PC-9 (cell line): ENCODE measurements at regions of chr10 and their contacts with region 1.

Region 1: DNA sequence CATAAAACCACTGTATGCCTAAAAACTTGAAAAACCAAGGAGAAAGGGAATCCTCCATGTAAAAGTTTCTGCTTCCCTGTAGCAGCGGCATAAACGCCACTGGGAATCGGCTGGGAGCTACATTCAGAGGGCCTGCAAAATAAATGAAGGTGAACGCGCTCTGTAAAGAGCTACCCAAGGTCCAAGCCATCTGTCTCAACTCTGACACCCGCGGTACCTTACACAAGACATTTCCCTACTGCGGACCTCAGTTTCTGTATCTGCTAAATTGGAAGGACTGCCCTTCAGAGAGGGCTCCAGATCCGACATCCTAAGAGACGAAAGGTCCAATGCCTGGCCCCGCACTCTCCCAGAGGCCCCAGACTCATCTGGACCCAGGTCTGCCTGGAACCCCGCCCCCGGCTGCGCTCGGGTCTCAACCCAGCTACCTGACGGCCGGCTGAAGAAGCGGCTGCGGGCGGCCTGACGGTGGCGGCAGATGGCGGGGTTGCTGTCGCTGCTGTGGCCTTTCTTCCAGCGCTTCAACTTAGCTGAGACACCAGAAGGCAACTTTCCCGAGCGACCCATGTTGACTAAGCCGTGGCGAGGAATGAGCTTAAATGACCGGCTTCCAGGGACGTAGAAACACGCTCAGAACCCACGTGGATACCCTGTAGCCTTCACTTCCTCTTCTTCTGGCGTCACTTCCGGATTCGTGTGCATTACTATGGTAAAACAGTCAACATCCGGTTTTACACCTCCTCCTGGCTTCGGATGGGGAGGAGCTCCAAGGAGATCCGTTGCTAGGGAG is at the start of gene RRP12:
- DNase-seq: peak; percentile 71 to 92
- H3K4me3 ChIP-seq: peak within 1 kb of the TSS; percentile 97
- H3K27ac ChIP-seq: peak within 1 kb of the TSS; percentile 61
- H3K4me1 ChIP-seq: no peaks in the 10 kb centered on the region
- H3K27me3 ChIP-seq: no peaks in the 10 kb centered on the region
- CTCF ChIP-seq: no peak
- total RNA-seq, gene RRP12: 22.6 and 34.3 TPM in 2 replicates

Region 2: GRCh38 chr10:97292097-97292862 is 108.6 kb before region 1 on chr10 and contains the start of gene ARHGAP19:
- CTCF ChIA-PET with region 1: no interaction called
- POLR2A ChIA-PET with region 1: no interaction called
- intact Hi-C with region 1: loop called (anchors 2 kb)
- DNase-seq: peak; percentile 89 to 93
- H3K4me3 ChIP-seq: peak within 1 kb of the TSS; percentile 61
- H3K27ac ChIP-seq: peak within 1 kb of the TSS; percentile 54
- H3K4me1 ChIP-seq: no peaks in the 10 kb centered on the region; the same call in 1 of the 2 replicates
- H3K27me3 ChIP-seq: no peaks in the 10 kb centered on the region
- CTCF ChIP-seq: no peak; the same call in 1 of the 2 replicates
- total RNA-seq, gene ARHGAP19: 11.2 and 11.5 TPM in 2 replicates

Region 3: DNA sequence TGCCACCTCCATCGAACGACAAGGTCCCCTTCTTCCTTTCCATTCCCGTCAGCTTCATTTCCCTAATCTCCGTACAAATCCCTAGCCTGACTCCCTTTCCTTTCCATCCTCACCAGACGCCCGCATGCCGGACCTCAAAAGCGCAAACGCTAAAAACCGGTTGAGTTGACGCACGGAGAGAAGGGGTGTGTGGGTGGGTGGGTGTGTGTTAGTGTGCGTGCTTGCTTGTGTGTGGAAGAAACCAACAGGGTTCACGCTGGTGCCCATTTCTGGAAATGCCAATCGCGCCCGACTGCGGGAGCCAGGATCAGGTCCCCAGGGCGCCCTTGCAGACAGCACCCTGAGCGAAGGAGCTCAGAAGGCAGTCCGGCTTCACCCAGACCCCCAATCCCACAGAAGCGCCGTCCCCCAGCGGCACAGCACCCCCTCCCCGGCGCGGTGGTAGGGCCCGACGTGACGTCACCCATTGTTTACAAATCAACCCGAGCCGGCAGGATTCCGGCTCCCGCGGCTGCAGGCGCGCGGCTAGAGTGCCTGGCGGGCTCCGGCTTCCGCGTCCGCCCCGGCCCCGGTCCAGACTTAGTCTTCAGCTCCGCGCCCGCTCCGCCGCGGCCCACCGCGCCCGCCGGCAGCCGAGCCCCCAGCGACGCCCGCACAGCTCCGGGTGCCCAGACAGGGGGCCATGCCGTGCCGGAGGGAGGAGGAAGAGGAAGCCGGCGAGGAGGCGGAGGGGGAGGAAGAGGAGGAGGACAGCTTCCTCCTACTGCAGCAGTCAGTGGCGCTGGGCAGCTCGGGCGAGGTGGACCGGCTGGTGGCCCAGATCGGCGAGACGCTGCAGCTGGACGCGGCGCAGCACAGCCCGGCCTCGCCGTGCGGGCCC is 81.8 kb before region 1 on chr10 and contains the start of gene FRAT1:
- CTCF ChIA-PET with region 1: no interaction called
- POLR2A ChIA-PET with region 1: interaction called, 12 read pairs
- intact Hi-C with region 1: no loop called
- DNase-seq: peak; percentile 68 to 82
- H3K4me3 ChIP-seq: peak within 1 kb of the TSS; percentile 71
- H3K27ac ChIP-seq: peak within 1 kb of the TSS; percentile 88
- H3K4me1 ChIP-seq: no peaks in the 10 kb centered on the region
- H3K27me3 ChIP-seq: no peaks in the 10 kb centered on the region
- CTCF ChIP-seq: no peak
- total RNA-seq, gene FRAT1: 2.4 and 2.7 TPM in 2 replicates

Region 4: DNA sequence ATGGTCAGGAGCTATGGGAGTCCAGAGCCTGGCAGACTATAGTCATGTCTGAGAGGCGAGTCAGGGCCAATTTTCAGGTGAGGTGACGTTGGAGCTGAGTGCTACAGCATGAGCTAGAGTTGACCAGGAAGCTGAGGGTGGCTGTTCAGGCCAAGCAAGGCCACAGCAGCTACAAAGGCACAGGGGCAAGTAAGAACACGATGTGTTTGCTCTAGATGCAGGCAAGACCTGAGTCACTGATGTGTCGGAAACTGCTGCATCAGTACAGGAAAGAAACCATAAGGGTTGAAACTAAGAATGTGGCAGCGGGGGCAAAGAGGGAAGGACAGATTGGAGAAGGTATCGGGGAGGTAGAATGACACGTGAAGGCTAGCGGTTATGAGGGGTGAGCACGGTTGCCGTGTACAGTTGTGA is 12.0 kb after region 1 on chr10:
- CTCF ChIA-PET with region 1: interaction called, 3 read pairs
- POLR2A ChIA-PET with region 1: interaction called, 24 read pairs
- intact Hi-C with region 1: no loop called
- DNase-seq: peak; percentile 47 to 81
- H3K4me3 ChIP-seq: no peak overlapping the region
- H3K27ac ChIP-seq: peak overlapping the region; percentile 50
- H3K4me1 ChIP-seq: peaks cover 10% of the 10 kb centered on the region
- H3K27me3 ChIP-seq: no peaks in the 10 kb centered on the region
- CTCF ChIP-seq: no peak

Region 5: GRCh38 chr10:97425964-97426775 is 25.3 kb after region 1 on chr10 and contains the start of gene PGAM1:
- CTCF ChIA-PET with region 1: interaction called, 5 read pairs
- POLR2A ChIA-PET with region 1: interaction called, 3 read pairs
- intact Hi-C with region 1: loop called (anchors 2 kb)
- DNase-seq: peak; percentile 76 to 93
- H3K4me3 ChIP-seq: peak within 1 kb of the TSS; percentile 84
- H3K27ac ChIP-seq: peak within 1 kb of the TSS; percentile 39; the same call in 1 of the 2 replicates
- H3K4me1 ChIP-seq: peaks cover 12% of the 10 kb centered on the region
- H3K27me3 ChIP-seq: no peaks in the 10 kb centered on the region
- CTCF ChIP-seq: peak; percentile 53
- total RNA-seq, gene PGAM1: 177 and 243 TPM in 2 replicates

Region 6: GRCh38 chr10:97479939-97480338 is 79.1 kb after region 1 on chr10:
- CTCF ChIA-PET with region 1: no interaction called
- POLR2A ChIA-PET with region 1: no interaction called
- intact Hi-C with region 1: no loop called
- DNase-seq: no peak
- H3K4me3 ChIP-seq: no peak overlapping the region
- H3K27ac ChIP-seq: no peak overlapping the region
- H3K4me1 ChIP-seq: 0 out of 2 replicates have a peak, but pooled peaks cover 3% of the 10 kb centered on the region
- H3K27me3 ChIP-seq: no peaks in the 10 kb centered on the region
- CTCF ChIP-seq: no peak